Endothelial cell of umbilical vein (primary cell): ENCODE measurements at regions of chr15 and their contacts with region 1.

Region 1: DNA sequence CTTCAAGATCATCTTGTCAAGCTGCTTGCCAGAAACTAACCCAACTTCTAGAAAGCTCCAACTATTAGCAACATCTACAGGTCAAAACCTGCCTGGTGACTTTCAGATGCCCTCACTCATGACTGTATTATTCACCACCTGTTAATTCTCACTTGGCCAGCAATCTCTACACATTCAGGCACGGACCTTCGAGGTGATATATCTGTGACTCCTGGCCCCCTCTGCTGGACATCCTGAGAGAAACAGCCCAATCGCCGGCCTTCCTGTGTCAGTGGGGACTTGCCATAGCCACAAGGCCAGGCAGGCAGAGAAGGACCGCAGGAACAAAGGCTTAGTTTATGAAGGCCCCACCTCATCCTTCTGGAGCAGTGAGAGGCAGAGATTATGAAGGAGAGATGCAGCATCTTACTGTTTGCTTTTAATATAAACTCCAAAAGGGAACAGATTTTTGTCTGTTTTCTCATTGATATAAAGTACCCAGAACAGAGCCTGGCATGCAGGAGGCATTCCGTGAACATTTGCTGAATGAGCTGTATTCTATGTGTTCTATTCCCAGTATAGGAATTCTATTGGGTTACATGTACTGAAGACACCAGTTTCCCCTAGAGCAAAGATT is 24.4 kb upstream of the OCA2 start:
- DNase-seq: peak; percentile 75
- H3K4me3 ChIP-seq: no peak overlapping the region
- H3K27ac ChIP-seq: no peak overlapping the region
- H3K4me1 ChIP-seq: no peaks in the 10 kb centered on the region
- H3K27me3 ChIP-seq: no peaks in the 10 kb centered on the region
- CTCF ChIP-seq: peak; percentile 69 to 71
- POLR2A ChIP-seq: no peak

Region 2: GRCh38 chr15:26891448-26892181 is 1231.9 kb before region 1 on chr15:
- CTCF ChIA-PET with region 1: interaction called, 22 read pairs
- POLR2A ChIA-PET with region 1: no interaction called
- dilution Hi-C with region 1: no loop called
- intact Hi-C with region 1: no loop called
- DNase-seq: peak; percentile 46
- H3K4me3 ChIP-seq: no peak overlapping the region
- H3K27ac ChIP-seq: no peak overlapping the region
- H3K4me1 ChIP-seq: no peaks in the 10 kb centered on the region
- H3K27me3 ChIP-seq: no peaks in the 10 kb centered on the region
- CTCF ChIP-seq: peak; percentile 49 to 52
- POLR2A ChIP-seq: no peak

Region 3: GRCh38 chr15:28085489-28086174 is 37.9 kb before region 1 on chr15:
- CTCF ChIA-PET with region 1: interaction called, 14 read pairs
- POLR2A ChIA-PET with region 1: no interaction called
- dilution Hi-C with region 1: no loop called
- intact Hi-C with region 1: no loop called
- DNase-seq: no peak
- H3K4me3 ChIP-seq: no peak overlapping the region
- H3K27ac ChIP-seq: no peak overlapping the region
- H3K4me1 ChIP-seq: no peaks in the 10 kb centered on the region
- H3K27me3 ChIP-seq: peaks cover 0 to 8% of the 10 kb centered on the region in 2 experiments
- CTCF ChIP-seq: no peak
- POLR2A ChIP-seq: no peak

Region 4: GRCh38 chr15:28098766-28099554 is 24.6 kb before region 1 on chr15 and contains the start of gene OCA2:
- CTCF ChIA-PET with region 1: interaction called, 28 read pairs
- POLR2A ChIA-PET with region 1: no interaction called
- dilution Hi-C with region 1: no loop called
- intact Hi-C with region 1: loop called (anchors 1 kb)
- DNase-seq: no peak
- H3K4me3 ChIP-seq: no peak within 1 kb of the TSS
- H3K27ac ChIP-seq: no peak within 1 kb of the TSS
- H3K4me1 ChIP-seq: peaks cover 12% of the 10 kb centered on the region
- H3K27me3 ChIP-seq: peaks cover 43 to 53% of the 10 kb centered on the region in 2 experiments
- CTCF ChIP-seq: peak in 1 of 2 donors; percentile 19
- POLR2A ChIP-seq: no peak
- total RNA-seq, gene OCA2: not detected in 2 replicates

Region 5: GRCh38 chr15:28106294-28107110 is 17.0 kb before region 1 on chr15:
- CTCF ChIA-PET with region 1: interaction called, 35 read pairs
- POLR2A ChIA-PET with region 1: no interaction called
- dilution Hi-C with region 1: no loop called
- intact Hi-C with region 1: no loop called
- DNase-seq: no peak
- H3K4me3 ChIP-seq: peak overlapping the region; percentile 45 to 59 (median 57)
- H3K27ac ChIP-seq: no peak overlapping the region
- H3K4me1 ChIP-seq: peaks cover 10% of the 10 kb centered on the region
- H3K27me3 ChIP-seq: no peaks in the 10 kb centered on the region
- CTCF ChIP-seq: no peak
- POLR2A ChIP-seq: no peak

Region 6: DNA sequence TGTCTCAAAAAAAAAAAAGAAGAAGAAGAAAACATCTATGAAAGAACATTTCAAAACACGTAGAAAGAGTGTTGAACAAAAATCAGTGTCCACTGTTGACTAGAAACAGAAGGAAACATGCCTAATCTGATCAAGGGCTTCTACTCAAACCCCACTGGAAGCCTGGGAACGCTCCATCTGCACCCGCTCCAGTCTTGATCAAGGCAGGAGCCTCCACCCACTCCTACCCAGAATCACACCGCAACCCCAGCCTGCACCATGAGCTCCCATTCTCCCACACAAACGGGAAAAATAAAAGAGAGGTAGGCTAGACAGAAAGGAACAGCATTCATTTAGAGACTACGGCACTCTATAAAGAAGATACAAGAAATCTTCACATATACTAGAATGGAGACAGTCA is 16.5 kb after region 1 on chr15:
- CTCF ChIA-PET with region 1: interaction called, 13 read pairs
- POLR2A ChIA-PET with region 1: no interaction called
- dilution Hi-C with region 1: no loop called
- intact Hi-C with region 1: no loop called
- DNase-seq: no peak
- H3K4me3 ChIP-seq: no peak overlapping the region
- H3K27ac ChIP-seq: no peak overlapping the region
- H3K4me1 ChIP-seq: no peaks in the 10 kb centered on the region
- H3K27me3 ChIP-seq: no peaks in the 10 kb centered on the region
- CTCF ChIP-seq: no peak
- POLR2A ChIP-seq: no peak